ENCODE measurements at regions of chr5 and their contacts with region 1.

Region 1: DNA sequence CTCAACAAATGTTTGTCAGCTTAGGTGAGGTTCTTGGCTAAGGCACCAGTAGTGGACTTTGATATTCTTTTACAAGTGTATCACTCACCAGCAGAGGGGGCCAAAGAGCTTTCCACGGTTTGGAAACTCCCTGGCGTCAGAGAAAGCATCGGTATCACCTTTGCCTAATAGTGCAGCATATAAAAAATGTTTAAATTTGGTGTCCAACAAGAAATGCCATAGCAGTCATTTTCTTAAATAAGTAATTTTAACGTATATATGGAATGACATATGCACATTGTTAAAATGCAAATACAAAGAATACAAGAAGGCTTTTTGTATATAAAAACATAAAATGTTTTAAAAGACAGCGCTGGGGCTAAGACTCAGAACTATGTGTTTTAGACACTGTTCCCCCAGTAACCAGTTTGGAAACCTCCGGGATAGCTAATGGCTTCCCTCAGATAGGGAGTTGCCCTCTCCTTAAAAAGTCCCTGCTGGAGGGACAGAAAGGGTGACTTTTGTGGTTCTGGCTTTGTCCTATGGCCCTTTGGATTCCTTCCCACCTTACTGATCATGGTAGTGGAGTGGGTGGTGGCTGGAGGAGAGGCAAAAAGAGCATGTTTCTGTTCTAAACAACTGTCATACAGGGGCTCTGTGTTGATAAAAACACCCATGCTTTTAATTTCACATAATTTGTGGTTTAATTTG is 124.6 kb downstream of the GPBP1 start:
- DNase-seq: peak; percentile 41 to 91
- ATAC-seq: peak; percentile 81 to 95 (median 92)
- H3K4me3 ChIP-seq: peak overlapping the region in 6 of 10 donors; percentile 0 to 37 (median 17)
- H3K27ac ChIP-seq: peak overlapping the region in 5 of 10 donors; percentile 18 to 58 (median 23)
- H3K4me1 ChIP-seq: peaks cover 3 to 13% (median 8%) of the 10 kb centered on the region in 9 donors
- H3K27me3 ChIP-seq: no peaks in the 10 kb centered on the region
- CTCF ChIP-seq: peak; percentile 74 to 89 (median 85)

Region 2: GRCh38 chr5:57243286-57244137 is 54.9 kb before region 1 on chr5:
- intact Hi-C with region 1: no loop called
- DNase-seq: no peak
- ATAC-seq: no peak
- H3K4me3 ChIP-seq: no peak overlapping the region
- H3K27ac ChIP-seq: no peak overlapping the region
- H3K4me1 ChIP-seq: peaks cover 0 to 5% (median 0%) of the 10 kb centered on the region in 9 donors
- H3K27me3 ChIP-seq: no peaks in the 10 kb centered on the region
- CTCF ChIP-seq: no peak

Region 3: GRCh38 chr5:57432876-57433275 is 134.4 kb after region 1 on chr5:
- intact Hi-C with region 1: loop called in 2 of 10 experiments (anchors 5 kb)
- DNase-seq: no peak
- ATAC-seq: no peak
- H3K4me3 ChIP-seq: no peak overlapping the region
- H3K27ac ChIP-seq: no peak overlapping the region
- H3K4me1 ChIP-seq: peaks cover 0 to 21% (median 2%) of the 10 kb centered on the region in 9 donors
- H3K27me3 ChIP-seq: no peaks in the 10 kb centered on the region
- CTCF ChIP-seq: peak in 2 of 9 donors; percentile 13 to 41

Region 4: DNA sequence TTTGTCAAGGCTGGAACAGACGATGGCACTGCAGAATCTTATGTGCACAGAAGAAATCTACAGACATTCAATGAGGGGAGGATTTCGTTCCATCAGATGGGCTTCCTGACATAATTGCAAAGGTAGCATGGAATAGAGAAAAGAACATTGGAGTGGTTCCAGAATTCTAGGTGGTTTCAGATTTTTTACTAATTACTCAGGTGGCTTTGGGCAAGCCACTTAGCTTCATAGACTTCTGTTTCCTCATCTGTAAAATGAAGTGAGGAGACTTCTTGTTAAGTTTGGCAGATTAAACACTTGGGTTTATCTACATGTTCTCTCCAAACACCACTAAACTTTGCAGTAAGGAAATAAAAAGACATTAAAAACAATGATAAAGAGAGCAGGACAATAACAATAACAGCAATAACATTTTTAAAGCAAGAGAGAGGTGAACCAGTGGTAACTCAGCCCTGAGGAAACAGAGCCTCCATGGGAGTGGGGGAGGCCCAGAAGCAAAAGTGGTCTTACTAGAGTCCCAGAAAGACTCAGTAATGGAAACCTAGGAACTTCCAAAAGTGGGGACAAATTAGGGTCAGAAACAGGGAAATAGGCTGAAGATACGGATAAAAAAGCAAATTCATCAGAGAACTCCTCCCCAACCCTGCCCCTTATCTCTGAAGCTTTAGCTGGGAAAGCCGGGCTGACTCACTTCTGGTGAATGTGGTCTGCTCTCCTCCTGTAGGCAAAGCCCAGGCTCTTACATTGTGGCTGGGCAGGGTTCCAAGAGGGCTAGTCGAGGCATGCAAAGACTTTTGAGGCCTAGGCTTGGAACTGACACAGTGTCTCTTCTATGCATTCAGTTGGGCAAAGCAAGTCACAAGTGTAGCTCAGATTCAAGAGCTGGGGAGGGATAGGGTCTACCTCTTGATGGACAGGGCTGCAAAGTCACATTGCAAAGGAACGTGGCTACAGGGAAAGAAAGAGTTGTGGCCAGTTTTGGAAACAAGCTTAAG is 196.0 kb after region 1 on chr5:
- intact Hi-C with region 1: loop called in 8 of 10 experiments (anchors 2 to 10 kb)
- DNase-seq: peak; percentile 15 to 55
- ATAC-seq: peak in 5 of 8 donors; percentile 63 to 90 (median 70)
- H3K4me3 ChIP-seq: no peak overlapping the region
- H3K27ac ChIP-seq: no peak overlapping the region
- H3K4me1 ChIP-seq: peaks cover 0 to 30% (median 17%) of the 10 kb centered on the region in 9 donors
- H3K27me3 ChIP-seq: no peaks in the 10 kb centered on the region
- CTCF ChIP-seq: no peak

Region 5: DNA sequence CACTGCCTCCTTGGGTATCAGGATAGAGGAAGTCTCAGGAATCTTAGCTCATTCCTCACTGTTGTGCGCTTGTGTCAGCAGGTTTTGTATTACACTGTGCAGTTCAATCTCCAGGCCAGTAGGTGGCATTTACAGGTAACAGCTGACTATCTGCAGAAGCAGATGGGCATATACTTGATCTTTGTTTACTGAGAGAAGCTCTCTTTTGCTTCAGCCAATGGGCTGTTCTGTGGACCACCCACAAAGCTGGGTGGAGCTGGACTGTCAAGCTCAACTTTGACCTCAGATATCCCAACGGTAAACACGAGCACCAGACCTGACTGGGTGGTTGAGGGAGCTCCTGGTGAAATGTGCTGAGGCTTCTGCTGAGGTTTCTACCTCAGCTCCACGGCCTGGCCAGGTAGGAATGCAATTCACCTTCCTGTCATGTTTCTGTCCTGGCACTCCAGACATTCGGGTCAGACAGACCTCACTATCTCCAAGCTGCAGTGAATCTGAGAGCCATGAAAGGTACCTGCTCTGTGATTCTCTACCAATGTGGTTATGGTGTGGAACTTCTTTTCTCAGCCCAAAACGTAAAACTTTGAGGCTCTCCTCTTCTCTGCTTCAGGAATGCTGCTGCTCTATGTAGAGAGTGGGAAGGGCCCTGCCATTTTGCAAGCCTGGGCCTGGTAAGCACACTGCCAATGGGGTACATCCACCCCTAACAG is 352.1 kb after region 1 on chr5:
- intact Hi-C with region 1: loop called in 2 of 10 experiments (anchors 5 to 10 kb)
- DNase-seq: no peak
- ATAC-seq: peak in 4 of 8 donors; percentile 37 to 58 (median 52)
- H3K4me3 ChIP-seq: no peak overlapping the region
- H3K27ac ChIP-seq: no peak overlapping the region
- H3K4me1 ChIP-seq: peaks cover 0 to 13% (median 0%) of the 10 kb centered on the region in 9 donors
- H3K27me3 ChIP-seq: no peaks in the 10 kb centered on the region
- CTCF ChIP-seq: peak; percentile 30 to 66 (median 57)

Region 6: DNA sequence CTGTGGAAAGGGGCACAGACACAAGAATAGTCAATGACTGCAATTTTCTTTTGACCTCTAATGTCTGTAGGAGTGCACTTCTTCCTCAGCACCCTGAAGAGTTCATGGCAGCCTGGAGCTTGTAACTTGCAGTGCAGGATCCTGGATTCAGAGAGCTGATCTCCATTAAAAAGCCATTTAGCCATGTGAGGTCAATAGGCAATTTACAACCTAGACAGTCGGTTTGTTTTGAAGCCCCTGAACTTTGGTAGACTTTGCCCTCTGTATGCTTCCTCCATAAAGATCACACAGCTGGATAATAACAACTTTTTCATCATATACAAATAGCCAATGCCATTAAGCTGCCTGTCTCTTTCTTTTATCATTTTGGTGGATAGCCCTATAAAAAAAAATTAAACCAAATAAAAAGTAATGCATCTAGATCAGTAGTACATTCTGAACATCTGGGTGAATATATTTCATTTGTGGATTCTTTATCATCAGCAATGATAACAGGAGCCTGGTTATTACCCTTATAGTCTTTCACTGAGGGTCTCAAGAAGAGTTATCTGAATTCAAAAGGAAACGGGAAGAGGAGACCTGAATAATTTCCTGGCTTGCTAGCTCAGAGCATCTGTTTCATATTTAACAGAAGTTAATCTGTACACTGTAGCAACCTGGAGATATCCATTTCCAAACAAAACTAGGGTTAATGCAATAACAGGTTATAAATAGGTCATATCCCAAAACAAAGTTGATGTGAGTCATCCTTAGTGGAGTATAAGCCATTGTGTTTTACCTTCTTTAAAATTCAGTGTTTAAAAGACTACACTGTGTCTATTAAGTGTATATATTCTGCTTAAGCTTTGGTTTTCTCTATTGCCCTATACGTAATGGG is 378.0 kb after region 1 on chr5:
- intact Hi-C with region 1: no loop called
- DNase-seq: no peak
- ATAC-seq: no peak
- H3K4me3 ChIP-seq: no peak overlapping the region
- H3K27ac ChIP-seq: no peak overlapping the region
- H3K4me1 ChIP-seq: peaks cover 0 to 10% (median 0%) of the 10 kb centered on the region in 9 donors
- H3K27me3 ChIP-seq: no peaks in the 10 kb centered on the region
- CTCF ChIP-seq: no peak

Region 7: DNA sequence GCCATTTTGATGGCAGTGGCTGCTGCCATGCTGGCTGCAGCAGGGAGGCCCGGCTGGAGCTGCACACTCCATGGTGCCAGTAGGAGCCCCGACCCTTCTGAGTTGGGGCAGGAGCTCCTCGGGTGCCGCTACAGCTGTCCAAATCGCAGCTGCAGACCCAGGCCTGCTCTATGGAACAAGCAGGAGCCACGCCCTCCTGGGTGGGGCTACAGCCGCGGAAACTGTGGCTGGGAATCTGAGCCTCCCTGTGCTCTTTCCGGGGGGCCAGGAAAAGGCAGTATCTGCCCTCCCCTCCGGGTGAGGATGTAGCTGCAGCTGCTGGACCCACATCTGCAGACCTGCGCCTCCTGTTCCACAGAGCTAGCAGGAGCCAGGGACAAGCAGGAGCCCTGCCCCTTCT is 463.1 kb after region 1 on chr5:
- intact Hi-C with region 1: loop called in 1 of 10 experiments (anchors 10 kb)
- DNase-seq: no peak
- ATAC-seq: no peak
- H3K4me3 ChIP-seq: no peak overlapping the region
- H3K27ac ChIP-seq: no peak overlapping the region
- H3K4me1 ChIP-seq: no peaks in the 10 kb centered on the region
- H3K27me3 ChIP-seq: no peaks in the 10 kb centered on the region
- CTCF ChIP-seq: no peak

Region 8: GRCh38 chr5:57779383-57780223 is 481.2 kb after region 1 on chr5:
- intact Hi-C with region 1: loop called in 9 of 10 experiments (anchors 2 to 10 kb)
- DNase-seq: peak in 1 of 2 donors; percentile 56
- ATAC-seq: peak; percentile 71 to 89 (median 83)
- H3K4me3 ChIP-seq: peak overlapping the region in 3 of 10 donors; percentile 2 to 11 (median 8)
- H3K27ac ChIP-seq: peak overlapping the region in 7 of 10 donors; percentile 35 to 73 (median 64)
- H3K4me1 ChIP-seq: peaks cover 0 to 50% (median 13%) of the 10 kb centered on the region in 9 donors
- H3K27me3 ChIP-seq: no peaks in the 10 kb centered on the region
- CTCF ChIP-seq: peak; percentile 23 to 86 (median 69)

Region 9: GRCh38 chr5:57887851-57888621 is 589.6 kb after region 1 on chr5:
- intact Hi-C with region 1: loop called in 7 of 10 experiments (anchors 2 to 10 kb)
- DNase-seq: peak in 1 of 2 donors; percentile 69
- ATAC-seq: peak; percentile 89 to 93 (median 90)
- H3K4me3 ChIP-seq: no peak overlapping the region
- H3K27ac ChIP-seq: peak overlapping the region in 1 of 10 donors; percentile 8
- H3K4me1 ChIP-seq: peaks cover 0 to 32% (median 11%) of the 10 kb centered on the region in 9 donors
- H3K27me3 ChIP-seq: no peaks in the 10 kb centered on the region
- CTCF ChIP-seq: peak; percentile 42 to 82 (median 66)

Measured in heart right ventricle (tissue), 16 donors.